Heart right ventricle (tissue), 16 donors: ENCODE measurements at regions of chr12 and their contacts with region 1.

Region 1: DNA sequence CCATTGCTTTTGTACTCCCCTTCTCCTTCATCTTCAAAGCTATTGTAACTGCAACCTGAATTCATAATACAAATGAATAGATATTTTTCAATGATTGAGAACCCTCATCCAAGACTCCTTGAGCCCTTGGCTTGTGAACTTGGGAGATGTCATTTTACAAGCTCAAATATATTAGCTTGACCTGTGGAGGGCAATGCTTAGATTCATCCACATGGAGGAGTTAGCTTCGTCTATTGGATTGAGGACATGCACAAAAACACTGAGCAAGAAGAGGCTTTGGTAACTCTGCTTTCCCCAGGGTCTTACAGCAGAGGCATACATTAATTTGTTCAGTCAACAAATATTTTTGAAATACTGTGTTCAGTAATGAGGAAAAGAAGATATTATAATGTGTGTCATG is 101.1 kb downstream of the OTOGL start:
- DNase-seq: no peak
- ATAC-seq: no peak
- H3K4me3 ChIP-seq: no peak overlapping the region
- H3K27ac ChIP-seq: no peak overlapping the region
- H3K4me1 ChIP-seq: peaks cover 0 to 1% (median 0%) of the 10 kb centered on the region in 9 donors
- H3K27me3 ChIP-seq: no peaks in the 10 kb centered on the region
- CTCF ChIP-seq: no peak

Region 2: DNA sequence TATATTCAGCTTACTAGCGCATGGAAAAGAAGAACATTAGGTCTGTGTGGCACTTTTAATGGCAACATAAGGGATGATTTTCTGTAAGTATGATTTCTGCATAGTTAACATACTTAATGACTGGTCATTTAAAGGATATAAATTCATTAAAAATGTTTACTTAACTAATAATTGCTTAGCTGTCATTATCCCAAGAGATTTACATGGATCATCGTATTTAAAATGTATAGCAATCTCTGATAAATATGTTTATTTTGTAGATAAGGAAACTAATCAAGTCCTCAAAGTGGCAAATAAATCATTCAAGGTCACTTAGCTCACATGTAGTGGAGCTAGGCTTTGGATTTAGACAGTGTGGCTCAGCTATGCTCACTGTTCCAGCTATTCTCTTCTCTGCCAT is 57.5 kb after region 1 on chr12:
- intact Hi-C with region 1: loop called in 1 of 10 experiments (anchors 5 kb)
- DNase-seq: no peak
- ATAC-seq: no peak
- H3K4me3 ChIP-seq: no peak overlapping the region
- H3K27ac ChIP-seq: no peak overlapping the region
- H3K4me1 ChIP-seq: no peaks in the 10 kb centered on the region
- H3K27me3 ChIP-seq: no peaks in the 10 kb centered on the region
- CTCF ChIP-seq: no peak

Region 3: GRCh38 chr12:80381121-80381520 is 180.7 kb after region 1 on chr12:
- intact Hi-C with region 1: no loop called
- DNase-seq: no peak
- ATAC-seq: no peak
- H3K4me3 ChIP-seq: no peak overlapping the region
- H3K27ac ChIP-seq: no peak overlapping the region
- H3K4me1 ChIP-seq: no peaks in the 10 kb centered on the region
- H3K27me3 ChIP-seq: no peaks in the 10 kb centered on the region
- CTCF ChIP-seq: no peak